ENCODE measurements at regions of chr20 and their contacts with region 1.

Region 1: GRCh38 chr20:47713878-47714450 is 71.3 kb downstream of the SULF2 start:
- DNase-seq: no peak
- H3K4me3 ChIP-seq: no peak overlapping the region
- CTCF ChIP-seq: no peak

Region 2: DNA sequence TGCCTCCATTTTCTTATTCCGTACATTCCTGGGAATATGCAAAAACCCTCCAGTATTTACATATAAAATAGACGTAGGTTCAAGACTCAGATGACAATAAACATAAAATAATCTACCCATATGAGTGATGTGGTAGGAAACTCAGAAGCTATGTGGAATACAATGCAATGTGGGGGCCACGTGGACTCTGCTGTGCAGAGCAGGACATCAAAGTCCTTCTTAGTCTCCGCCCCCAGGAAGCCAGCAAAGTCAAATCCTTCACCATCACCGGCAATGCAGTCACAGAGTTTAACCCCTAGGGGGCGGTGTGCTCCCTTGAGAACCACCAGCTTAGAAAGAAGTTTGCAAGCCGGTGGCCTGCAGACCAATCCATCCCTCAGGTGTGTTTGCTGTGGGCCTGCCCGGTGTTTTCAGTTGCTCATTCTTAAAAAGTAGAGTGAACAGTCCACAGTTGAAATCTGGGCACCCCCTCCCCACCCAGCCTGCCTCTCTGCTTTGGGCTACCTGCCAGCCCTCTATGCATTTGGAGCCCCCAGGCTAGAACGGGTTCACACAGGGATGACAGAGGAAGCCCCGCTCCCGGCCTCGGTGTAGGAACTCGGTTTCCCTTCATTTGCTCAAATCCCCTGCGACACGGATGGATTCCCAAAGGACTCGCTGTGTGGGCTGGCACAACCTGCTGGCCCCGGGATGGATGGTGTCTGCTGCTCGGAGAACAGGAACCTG is 11.4 kb after region 1 on chr20:
- CTCF ChIA-PET with region 1: interaction called, 13 read pairs
- POLR2A ChIA-PET with region 1: no interaction called
- DNase-seq: no peak
- H3K4me3 ChIP-seq: no peak overlapping the region
- CTCF ChIP-seq: peak; percentile 85

Region 3: GRCh38 chr20:47809111-47809912 is 95.3 kb after region 1 on chr20:
- CTCF ChIA-PET with region 1: no interaction called
- POLR2A ChIA-PET with region 1: no interaction called
- DNase-seq: no peak
- H3K4me3 ChIP-seq: no peak overlapping the region
- CTCF ChIP-seq: no peak